Left ventricle myocardium superior (tissue), 1 donor: ENCODE measurements at regions of chr5 and their contacts with region 1.

Region 1: GRCh38 chr5:176944276-176944675 is 45.1 kb upstream of the HK3 start:
- DNase-seq: no peak
- ATAC-seq: peak; percentile 91

Region 2: GRCh38 chr5:176481711-176482110 is 462.6 kb before region 1 on chr5:
- intact Hi-C with region 1: no loop called
- DNase-seq: no peak
- ATAC-seq: no peak

Region 3: DNA sequence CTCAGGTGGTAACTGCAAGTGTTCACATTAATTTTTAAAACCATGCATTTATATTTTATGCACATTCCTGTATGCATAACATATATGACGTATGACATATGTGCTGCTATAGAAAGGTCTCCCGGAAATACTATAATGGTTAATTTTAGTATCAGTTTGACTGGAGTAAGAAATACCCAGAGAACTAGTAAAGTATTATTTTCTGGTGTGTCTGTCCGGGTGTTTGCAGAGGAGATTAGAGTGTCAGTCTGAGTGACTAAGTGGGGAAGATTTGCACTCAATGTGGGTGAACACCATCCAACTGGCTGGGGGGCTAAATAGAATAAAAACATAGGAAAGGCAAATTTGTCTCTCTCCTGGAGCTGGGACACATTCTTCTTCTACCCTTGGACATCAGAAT is 35.4 kb after region 1 on chr5:
- intact Hi-C with region 1: loop called (anchors 5 kb)
- DNase-seq: no peak
- ATAC-seq: no peak